ENCODE measurements at regions of chr14 and their contacts with region 1.

Region 1: GRCh38 chr14:69766984-69767368 is at the start of gene SRSF5:
- DNase-seq: peak; percentile 89 to 97 (median 92)
- ATAC-seq: peak; percentile 78
- H3K4me3 ChIP-seq: peak within 1 kb of the TSS; percentile 97
- H3K4me3 Mint-ChIP-seq: peak within 1 kb of the TSS; percentile 100
- H3K27ac ChIP-seq: peak within 1 kb of the TSS; percentile 100
- H3K27ac Mint-ChIP-seq: peak within 1 kb of the TSS; percentile 100
- H3K4me1 ChIP-seq: peaks cover 53% of the 10 kb centered on the region
- H3K4me1 Mint-ChIP-seq: peaks cover 83% of the 10 kb centered on the region
- H3K27me3 ChIP-seq: no peaks in the 10 kb centered on the region
- H3K27me3 Mint-ChIP-seq: no peaks in the 10 kb centered on the region
- CTCF ChIP-seq: no peak
- total RNA-seq, gene SRSF5: 1,437 to 1,479 TPM

Region 2: GRCh38 chr14:67816326-67817002 is 1950.5 kb before region 1 on chr14 and contains the start of gene ZFYVE26:
- CTCF ChIA-PET with region 1: no interaction called
- POLR2A ChIA-PET with region 1: no interaction called
- intact Hi-C with region 1: loop called in 1 of 2 experiments (anchors 5 kb)
- DNase-seq: peak; percentile 77 to 95 (median 82)
- ATAC-seq: peak; percentile 94
- H3K4me3 ChIP-seq: peak within 1 kb of the TSS; percentile 78
- H3K4me3 Mint-ChIP-seq: peak within 1 kb of the TSS; percentile 94
- H3K27ac ChIP-seq: peak within 1 kb of the TSS; percentile 67 to 74
- H3K27ac Mint-ChIP-seq: peak within 1 kb of the TSS; percentile 85
- H3K4me1 ChIP-seq: peaks cover 38% of the 10 kb centered on the region
- H3K4me1 Mint-ChIP-seq: peaks cover 68% of the 10 kb centered on the region
- H3K27me3 ChIP-seq: no peaks in the 10 kb centered on the region
- H3K27me3 Mint-ChIP-seq: no peaks in the 10 kb centered on the region
- CTCF ChIP-seq: no peak
- total RNA-seq, gene ZFYVE26: 20.5 to 23.2 TPM

Region 3: DNA sequence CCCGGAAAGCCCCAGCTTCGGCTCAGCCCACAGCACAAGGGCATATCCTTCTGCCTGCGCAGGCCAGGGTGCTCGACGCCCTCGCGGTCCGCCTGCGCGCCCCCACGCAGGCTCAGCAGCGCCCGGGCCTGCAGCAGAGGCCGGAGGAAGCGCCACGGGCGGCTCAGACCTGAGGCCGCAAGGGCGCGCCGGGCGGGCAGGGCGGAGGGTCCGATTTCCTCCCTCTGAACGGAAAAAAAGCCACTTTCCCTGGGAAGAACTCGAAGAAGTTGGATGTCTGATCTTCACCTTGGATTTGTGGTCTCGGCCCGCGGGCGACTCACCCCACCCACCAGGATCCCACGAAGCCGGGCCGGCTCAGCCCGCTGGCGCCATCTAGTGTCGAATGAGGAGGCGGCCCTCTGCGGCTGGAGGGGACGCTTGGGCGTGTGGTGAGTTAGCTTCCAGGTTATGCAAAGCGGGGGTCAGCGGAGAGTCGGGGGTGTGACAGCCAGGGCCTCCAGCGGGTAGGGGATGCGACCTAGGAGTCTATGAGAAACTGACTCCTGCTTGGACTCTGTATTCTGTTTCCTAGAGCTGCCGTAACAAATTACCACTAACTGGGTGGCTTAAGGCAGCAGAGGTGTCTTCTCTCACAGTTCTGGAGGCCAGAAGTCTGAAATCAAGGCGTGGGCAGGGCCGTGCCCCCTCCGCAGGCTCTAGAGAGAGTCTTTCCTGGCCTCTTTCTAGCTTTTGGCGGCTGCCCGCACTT is 40.0 kb before region 1 on chr14:
- CTCF ChIA-PET with region 1: interaction called, 9 read pairs
- POLR2A ChIA-PET with region 1: interaction called, 12 read pairs
- intact Hi-C with region 1: no loop called
- DNase-seq: peak; percentile 64 to 90 (median 80)
- ATAC-seq: peak; percentile 87
- H3K4me3 ChIP-seq: peak overlapping the region; percentile 49
- H3K4me3 Mint-ChIP-seq: peak overlapping the region; percentile 79
- H3K27ac ChIP-seq: no peak overlapping the region
- H3K27ac Mint-ChIP-seq: peak overlapping the region; percentile 17
- H3K4me1 ChIP-seq: peaks cover 17% of the 10 kb centered on the region
- H3K4me1 Mint-ChIP-seq: peaks cover 24% of the 10 kb centered on the region
- H3K27me3 ChIP-seq: no peaks in the 10 kb centered on the region
- H3K27me3 Mint-ChIP-seq: no peaks in the 10 kb centered on the region
- CTCF ChIP-seq: peak; percentile 99

Region 4: DNA sequence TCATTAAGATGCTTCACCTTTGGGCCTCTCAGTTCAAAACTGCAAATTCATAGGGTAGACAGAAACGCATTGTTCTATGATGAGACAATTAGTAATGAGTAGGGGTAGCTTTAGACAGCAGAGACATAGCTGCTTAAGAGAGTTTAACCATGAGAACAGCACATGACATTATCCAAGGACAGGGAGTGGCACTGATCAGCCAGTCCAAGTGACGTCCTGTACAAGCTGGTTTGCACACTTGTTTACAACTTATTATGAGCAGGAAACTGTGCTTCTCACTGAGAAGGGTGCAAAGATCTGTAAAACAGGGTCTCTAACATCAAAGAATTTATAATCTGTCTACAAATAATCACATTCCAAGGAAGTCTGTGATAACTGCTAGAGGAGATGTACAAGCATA is 11.2 kb before region 1 on chr14:
- CTCF ChIA-PET with region 1: interaction called, 3 read pairs
- POLR2A ChIA-PET with region 1: interaction called, 32 read pairs
- intact Hi-C with region 1: no loop called
- DNase-seq: peak in 1 of 14 experiments; percentile 38
- ATAC-seq: peak; percentile 49
- H3K4me3 ChIP-seq: no peak overlapping the region
- H3K4me3 Mint-ChIP-seq: no peak overlapping the region
- H3K27ac ChIP-seq: no peak overlapping the region
- H3K27ac Mint-ChIP-seq: peak overlapping the region; percentile 76
- H3K4me1 ChIP-seq: peaks cover 10% of the 10 kb centered on the region
- H3K4me1 Mint-ChIP-seq: peaks cover 13% of the 10 kb centered on the region
- H3K27me3 ChIP-seq: no peaks in the 10 kb centered on the region
- H3K27me3 Mint-ChIP-seq: no peaks in the 10 kb centered on the region
- CTCF ChIP-seq: no peak

Region 5: DNA sequence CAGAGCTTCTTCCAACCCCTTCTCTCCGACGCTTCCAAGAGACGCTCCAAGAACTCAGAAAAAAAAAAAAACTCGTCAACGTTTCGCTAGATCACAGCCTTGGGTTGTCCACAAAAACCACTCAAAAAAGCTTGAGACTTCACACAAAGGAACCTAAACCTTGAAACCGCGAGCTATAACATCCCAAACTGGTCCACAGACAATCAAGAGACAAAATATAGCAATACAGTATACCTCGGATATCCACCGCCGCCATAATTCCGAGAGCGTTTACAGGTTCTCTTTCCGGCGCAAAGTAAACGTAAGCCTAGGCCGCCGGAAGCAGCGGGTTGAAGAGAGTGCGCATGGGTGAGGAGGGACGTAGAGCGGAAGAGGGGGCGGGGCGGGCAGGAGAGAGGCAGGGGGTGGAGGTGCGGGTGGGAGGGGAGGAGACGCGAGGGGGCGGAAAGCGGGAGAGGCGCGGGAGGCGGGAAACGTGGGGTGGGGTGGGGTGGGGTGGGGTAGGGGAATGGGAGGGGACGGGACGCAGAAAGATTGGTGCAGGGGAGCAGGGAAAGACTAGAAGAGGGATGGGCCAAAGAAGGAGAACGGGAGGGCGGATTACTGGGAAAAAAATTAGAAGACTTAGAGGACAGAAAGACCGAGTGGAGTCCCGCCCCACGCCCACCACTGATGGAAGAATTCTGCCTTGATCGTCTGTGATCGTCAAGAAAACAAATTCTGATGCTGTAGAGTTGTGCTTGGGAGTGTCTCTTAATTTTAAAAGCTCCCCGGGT is 833.6 kb after region 1 on chr14 and contains the start of gene MED6:
- CTCF ChIA-PET with region 1: no interaction called
- POLR2A ChIA-PET with region 1: no interaction called
- intact Hi-C with region 1: loop called in 1 of 2 experiments (anchors 10 kb)
- DNase-seq: peak; percentile 83 to 97 (median 91)
- ATAC-seq: peak; percentile 99
- H3K4me3 ChIP-seq: peak within 1 kb of the TSS; percentile 97
- H3K4me3 Mint-ChIP-seq: peak within 1 kb of the TSS; percentile 100
- H3K27ac ChIP-seq: peak within 1 kb of the TSS; percentile 79 to 92
- H3K27ac Mint-ChIP-seq: peak within 1 kb of the TSS; percentile 99
- H3K4me1 ChIP-seq: peaks cover 15% of the 10 kb centered on the region
- H3K4me1 Mint-ChIP-seq: peaks cover 37% of the 10 kb centered on the region
- H3K27me3 ChIP-seq: no peaks in the 10 kb centered on the region
- H3K27me3 Mint-ChIP-seq: peaks cover 5% of the 10 kb centered on the region
- CTCF ChIP-seq: no peak
- total RNA-seq, gene MED6: 90.2 to 97.2 TPM